Left colon (tissue), 2 donors: ENCODE measurements at regions of chr20 and their contacts with region 1.

Region 1: DNA sequence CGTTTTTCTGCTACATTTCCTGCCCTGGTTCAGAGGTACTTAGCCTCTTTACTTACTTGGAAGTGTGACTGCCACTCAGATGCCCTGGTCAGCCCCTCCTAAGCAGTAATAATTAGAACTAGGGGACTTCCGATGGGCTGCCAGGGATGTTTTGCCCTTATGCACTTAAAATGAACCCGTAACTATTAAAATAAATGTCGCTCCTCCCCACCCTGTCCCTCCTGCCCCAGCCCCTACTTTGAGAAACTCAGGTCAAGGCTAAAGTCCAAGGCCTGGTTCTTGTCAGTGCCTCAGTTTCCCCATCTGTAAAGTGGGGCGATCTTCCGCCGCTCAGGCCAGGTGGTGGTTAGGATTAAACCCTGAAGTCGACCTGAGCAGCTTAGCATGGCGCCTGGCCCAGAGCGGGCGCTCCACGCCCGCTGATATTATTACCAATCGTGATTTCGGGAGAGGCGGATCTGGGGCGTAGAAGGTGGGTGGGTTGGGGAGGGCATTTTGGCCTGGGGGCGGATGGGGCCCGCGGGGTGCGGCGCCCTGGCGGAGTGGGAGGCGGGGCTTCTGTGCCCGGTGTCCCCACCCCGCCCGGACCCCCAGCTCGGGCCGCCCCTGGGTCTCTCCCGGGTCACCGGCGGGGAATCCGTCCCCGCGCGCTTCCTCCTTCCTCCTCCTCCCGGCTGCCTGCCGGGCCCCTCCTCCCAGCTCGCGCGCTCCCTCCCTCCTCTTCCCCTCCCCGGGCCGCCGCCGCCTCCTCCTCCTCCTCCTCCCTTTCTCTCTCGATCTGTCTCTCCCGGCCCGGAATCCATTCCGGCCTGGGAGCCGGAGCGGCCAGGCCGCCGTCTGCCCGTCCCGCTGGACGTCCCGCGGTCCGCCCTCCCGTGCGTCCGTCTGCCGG is at the start of gene SRC:
- DNase-seq: peak; percentile 89 to 93
- ATAC-seq: peak; percentile 69
- total RNA-seq, gene SRC: 117 to 121 TPM

Region 2: DNA sequence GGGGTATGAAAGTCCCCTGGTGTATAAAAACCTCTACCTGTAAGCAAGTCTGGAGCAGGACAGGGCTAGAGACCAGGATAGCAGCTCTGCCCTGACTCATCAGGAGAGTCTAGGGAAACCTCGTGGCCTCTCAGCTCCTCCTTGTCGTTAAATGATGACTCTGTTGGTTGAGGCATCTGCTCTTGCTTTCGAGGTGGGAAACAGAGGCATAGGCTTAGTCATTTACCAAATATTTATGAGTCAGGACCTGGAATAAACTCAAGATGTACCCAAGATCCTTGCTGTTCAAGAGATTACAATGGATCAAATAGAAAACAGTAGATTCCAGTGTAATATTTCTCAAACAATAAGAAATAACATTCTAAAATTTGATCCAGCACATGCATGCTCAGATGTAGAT is 50.6 kb before region 1 on chr20:
- intact Hi-C with region 1: loop called (anchors 5 kb)
- DNase-seq: peak in 1 of 2 donors; percentile 60
- ATAC-seq: peak; percentile 42